ENCODE measurements at regions of chr6 and their contacts with region 1.

Region 1: DNA sequence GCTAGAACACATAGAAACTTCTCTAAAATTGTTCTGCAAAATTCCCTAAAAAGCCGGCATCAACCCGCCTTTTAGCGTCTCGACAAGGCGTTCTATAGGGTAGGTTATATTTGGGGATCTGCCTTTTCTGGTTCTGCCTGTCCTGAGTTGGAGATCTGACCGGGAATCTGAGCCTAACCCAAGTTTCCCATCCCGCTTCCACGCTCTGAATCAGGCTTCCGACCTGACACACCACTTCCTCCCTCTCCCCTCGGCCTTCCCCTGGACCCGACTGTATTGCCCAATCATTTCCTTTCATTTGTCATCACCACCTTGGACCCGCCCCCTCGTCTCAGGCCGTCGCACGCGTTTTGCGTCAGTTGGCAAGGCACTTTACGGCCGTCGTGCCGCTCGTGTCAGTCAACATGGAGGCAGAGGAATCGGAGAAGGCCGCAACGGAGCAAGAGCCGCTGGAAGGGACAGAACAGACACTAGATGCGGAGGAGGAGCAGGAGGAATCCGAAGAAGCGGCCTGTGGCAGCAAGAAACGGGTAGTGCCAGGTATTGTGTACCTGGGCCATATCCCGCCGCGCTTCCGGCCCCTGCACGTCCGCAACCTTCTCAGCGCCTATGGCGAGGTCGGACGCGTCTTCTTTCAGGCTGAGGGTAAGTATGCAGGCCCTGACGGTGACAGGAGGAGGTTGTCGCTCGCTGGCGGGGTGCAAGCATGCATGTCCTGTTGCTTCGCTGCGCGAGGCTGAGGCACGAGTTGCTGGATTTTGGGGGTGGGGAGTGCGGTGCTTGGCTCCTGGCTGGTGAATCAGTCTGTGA is at the start of gene ABT1:
- DNase-seq: peak; percentile 96 to 98
- ATAC-seq: peak; percentile 88 to 96 (median 90)
- H3K4me3 ChIP-seq: peak within 1 kb of the TSS; percentile 79
- H3K4me3 Mint-ChIP-seq: no peak within 1 kb of the TSS
- H3K27ac ChIP-seq: peak within 1 kb of the TSS; percentile 92
- H3K27ac Mint-ChIP-seq: no peak within 1 kb of the TSS
- H3K4me1 ChIP-seq: peaks cover 18% of the 10 kb centered on the region
- H3K4me1 Mint-ChIP-seq: peaks cover 6 to 10% of the 10 kb centered on the region in 2 donors
- H3K27me3 ChIP-seq: peaks cover 20% of the 10 kb centered on the region
- H3K27me3 Mint-ChIP-seq: peaks cover 0 to 15% of the 10 kb centered on the region in 2 donors
- CTCF ChIP-seq: no peak
- total RNA-seq, gene ABT1: 23.9 to 30.7 (median 29.9) TPM

Region 2: GRCh38 chr6:26568601-26569432 is 28.0 kb before region 1 on chr6:
- intact Hi-C with region 1: loop called (anchors 1 kb)
- DNase-seq: peak; percentile 99
- ATAC-seq: peak; percentile 76 to 82 (median 81)
- H3K4me3 ChIP-seq: peak overlapping the region; percentile 90
- H3K4me3 Mint-ChIP-seq: peak overlapping the region; percentile 97
- H3K27ac ChIP-seq: peak overlapping the region; percentile 66
- H3K27ac Mint-ChIP-seq: peak overlapping the region; percentile 99 to 100
- H3K4me1 ChIP-seq: peaks cover 25% of the 10 kb centered on the region
- H3K4me1 Mint-ChIP-seq: peaks cover 27 to 34% of the 10 kb centered on the region in 2 donors
- H3K27me3 ChIP-seq: no peaks in the 10 kb centered on the region
- H3K27me3 Mint-ChIP-seq: peaks cover 5 to 6% of the 10 kb centered on the region in 2 donors
- CTCF ChIP-seq: no peak

Region 3: DNA sequence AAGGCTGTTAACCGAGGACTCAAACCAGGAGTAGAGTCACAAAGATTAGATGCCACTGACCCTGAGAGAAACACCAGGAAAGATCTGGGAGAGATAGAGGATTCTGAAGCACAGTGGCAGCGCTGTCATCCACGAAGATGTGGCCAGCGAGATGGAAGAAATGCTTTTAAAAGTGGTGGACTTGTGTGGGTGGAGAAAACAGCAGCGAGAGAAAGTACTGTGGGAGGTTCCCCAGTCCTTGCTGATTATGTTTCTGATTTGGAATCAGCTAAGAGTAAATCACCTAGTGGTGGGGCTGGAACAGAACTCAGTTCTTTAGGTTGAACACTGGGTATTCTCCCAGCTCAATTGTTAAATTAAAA is 63.2 kb after region 1 on chr6:
- intact Hi-C with region 1: loop called (anchors 1 kb)
- DNase-seq: peak in 1 of 2 donors; percentile 59
- ATAC-seq: peak; percentile 39 to 51 (median 40)
- H3K4me3 ChIP-seq: peak overlapping the region; percentile 61
- H3K4me3 Mint-ChIP-seq: peak overlapping the region; percentile 93
- H3K27ac ChIP-seq: peak overlapping the region; percentile 77
- H3K27ac Mint-ChIP-seq: peak overlapping the region; percentile 75 to 81
- H3K4me1 ChIP-seq: peaks cover 2% of the 10 kb centered on the region
- H3K4me1 Mint-ChIP-seq: peaks cover 28 to 38% of the 10 kb centered on the region in 2 donors
- H3K27me3 ChIP-seq: peaks cover 10% of the 10 kb centered on the region
- H3K27me3 Mint-ChIP-seq: peaks cover 22 to 31% of the 10 kb centered on the region in 2 donors
- CTCF ChIP-seq: no peak

Region 4: GRCh38 chr6:27132532-27133280 is 535.9 kb after region 1 on chr6:
- intact Hi-C with region 1: loop called (anchors 5 kb)
- DNase-seq: peak; percentile 87 to 98
- ATAC-seq: peak; percentile 82 to 95 (median 87)
- H3K4me3 ChIP-seq: peak overlapping the region; percentile 65
- H3K4me3 Mint-ChIP-seq: no peak overlapping the region
- H3K27ac ChIP-seq: peak overlapping the region; percentile 85
- H3K27ac Mint-ChIP-seq: no peak overlapping the region
- H3K4me1 ChIP-seq: peaks cover 29% of the 10 kb centered on the region
- H3K4me1 Mint-ChIP-seq: peaks cover 5 to 6% of the 10 kb centered on the region in 2 donors
- H3K27me3 ChIP-seq: no peaks in the 10 kb centered on the region
- H3K27me3 Mint-ChIP-seq: no peaks in the 10 kb centered on the region
- CTCF ChIP-seq: no peak